ENCODE measurements at regions of chr15 and their contacts with region 1.

Region 1: GRCh38 chr15:90931737-90932659 is at the start of gene HDDC3:
- H3K4me3 ChIP-seq: peak within 1 kb of the TSS; percentile 87
- H3K27ac ChIP-seq: peak within 1 kb of the TSS; percentile 93
- H3K4me1 ChIP-seq: 0 out of 2 replicates have a peak, but pooled peaks cover 2% of the 10 kb centered on the region
- CTCF ChIP-seq: peak; percentile 96

Region 2: GRCh38 chr15:90706394-90707327 is 225.3 kb before region 1 on chr15:
- CTCF ChIA-PET with region 1: interaction called, 11 read pairs
- POLR2A ChIA-PET with region 1: interaction called, 5 read pairs
- H3K4me3 ChIP-seq: no peak overlapping the region
- H3K27ac ChIP-seq: peak overlapping the region; percentile 90
- H3K4me1 ChIP-seq: peaks cover 35% of the 10 kb centered on the region
- CTCF ChIP-seq: no peak

Region 3: GRCh38 chr15:90902040-90902839 is 29.8 kb before region 1 on chr15:
- CTCF ChIA-PET with region 1: interaction called, 126 read pairs
- POLR2A ChIA-PET with region 1: interaction called, 88 read pairs
- H3K4me3 ChIP-seq: peak overlapping the region; percentile 74
- H3K27ac ChIP-seq: peak overlapping the region; percentile 98
- H3K4me1 ChIP-seq: peaks cover 13% of the 10 kb centered on the region
- CTCF ChIP-seq: peak; percentile 97

Region 4: GRCh38 chr15:90954712-90955671 is 23.0 kb after region 1 on chr15 and contains the start of gene RCCD1:
- CTCF ChIA-PET with region 1: interaction called, 163 read pairs
- POLR2A ChIA-PET with region 1: interaction called, 179 read pairs
- H3K4me3 ChIP-seq: peak within 1 kb of the TSS; percentile 73
- H3K27ac ChIP-seq: peak within 1 kb of the TSS; percentile 88
- H3K4me1 ChIP-seq: no peaks in the 10 kb centered on the region; the same call in 1 of the 2 replicates
- CTCF ChIP-seq: no peak

Region 5: GRCh38 chr15:91027677-91028076 is 95.7 kb after region 1 on chr15:
- CTCF ChIA-PET with region 1: interaction called, 38 read pairs
- POLR2A ChIA-PET with region 1: interaction called, 15 read pairs
- H3K4me3 ChIP-seq: no peak overlapping the region
- H3K27ac ChIP-seq: no peak overlapping the region
- H3K4me1 ChIP-seq: no peaks in the 10 kb centered on the region
- CTCF ChIP-seq: no peak

Region 6: DNA sequence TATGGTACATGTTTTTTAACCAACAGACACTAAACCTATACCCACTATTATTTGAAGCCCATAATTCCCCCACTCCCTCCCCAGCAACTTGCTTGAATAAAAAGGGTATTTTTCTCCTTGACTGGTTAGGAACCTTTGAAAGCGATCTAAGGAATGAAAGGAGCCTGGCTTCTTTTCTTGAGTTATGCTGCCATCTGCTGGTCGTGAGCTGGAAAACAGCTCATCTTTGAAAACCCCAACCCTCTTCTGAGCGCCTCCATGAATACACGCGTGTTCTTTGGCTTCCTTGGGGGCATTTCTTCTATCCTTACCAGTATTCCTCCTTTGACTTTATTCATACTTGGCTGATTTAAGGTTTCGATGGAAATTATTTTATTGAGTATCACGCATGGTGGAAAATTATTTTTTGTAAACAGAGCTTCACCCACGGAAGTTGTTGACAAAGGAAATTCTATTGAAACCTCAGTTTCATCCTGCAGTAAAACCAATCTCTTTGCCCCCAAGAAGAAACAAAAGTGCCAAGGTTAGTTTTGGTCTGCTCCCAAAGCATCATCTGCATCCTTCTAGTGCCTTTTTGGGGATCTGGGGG is 339.7 kb after region 1 on chr15:
- CTCF ChIA-PET with region 1: interaction called, 15 read pairs
- POLR2A ChIA-PET with region 1: interaction called, 5 read pairs
- H3K4me3 ChIP-seq: no peak overlapping the region
- H3K27ac ChIP-seq: no peak overlapping the region
- H3K4me1 ChIP-seq: no peaks in the 10 kb centered on the region
- CTCF ChIP-seq: peak; percentile 63